Activated CD8-positive, alpha-beta memory T cell treated with anti-CD3 and anti-CD28 coated beads, Interleukin-2, amount 10 ng/mL, durations not matched to agents 7 days and 5 days (primary cell): ENCODE measurements at regions of chr3 and their contacts with region 1.

Region 1: GRCh38 chr3:169966428-169966950 is at the start of gene SEC62:
- DNase-seq: peak; percentile 94
- ATAC-seq: peak; percentile 91
- H3K4me3 Mint-ChIP-seq: peak within 1 kb of the TSS; percentile 80
- H3K27ac Mint-ChIP-seq: peak within 1 kb of the TSS; percentile 93
- H3K4me1 Mint-ChIP-seq: peaks cover 41% of the 10 kb centered on the region
- H3K27me3 Mint-ChIP-seq: no peaks in the 10 kb centered on the region
- total RNA-seq, gene SEC62: 36.0 to 47.7 TPM

Region 2: GRCh38 chr3:169980055-169980454 is 13.6 kb after region 1 on chr3:
- CTCF ChIA-PET with region 1: interaction called, 10 read pairs
- DNase-seq: no peak
- ATAC-seq: no peak
- H3K4me3 Mint-ChIP-seq: no peak overlapping the region
- H3K27ac Mint-ChIP-seq: no peak overlapping the region
- H3K4me1 Mint-ChIP-seq: peaks cover 2% of the 10 kb centered on the region
- H3K27me3 Mint-ChIP-seq: no peaks in the 10 kb centered on the region

Region 3: DNA sequence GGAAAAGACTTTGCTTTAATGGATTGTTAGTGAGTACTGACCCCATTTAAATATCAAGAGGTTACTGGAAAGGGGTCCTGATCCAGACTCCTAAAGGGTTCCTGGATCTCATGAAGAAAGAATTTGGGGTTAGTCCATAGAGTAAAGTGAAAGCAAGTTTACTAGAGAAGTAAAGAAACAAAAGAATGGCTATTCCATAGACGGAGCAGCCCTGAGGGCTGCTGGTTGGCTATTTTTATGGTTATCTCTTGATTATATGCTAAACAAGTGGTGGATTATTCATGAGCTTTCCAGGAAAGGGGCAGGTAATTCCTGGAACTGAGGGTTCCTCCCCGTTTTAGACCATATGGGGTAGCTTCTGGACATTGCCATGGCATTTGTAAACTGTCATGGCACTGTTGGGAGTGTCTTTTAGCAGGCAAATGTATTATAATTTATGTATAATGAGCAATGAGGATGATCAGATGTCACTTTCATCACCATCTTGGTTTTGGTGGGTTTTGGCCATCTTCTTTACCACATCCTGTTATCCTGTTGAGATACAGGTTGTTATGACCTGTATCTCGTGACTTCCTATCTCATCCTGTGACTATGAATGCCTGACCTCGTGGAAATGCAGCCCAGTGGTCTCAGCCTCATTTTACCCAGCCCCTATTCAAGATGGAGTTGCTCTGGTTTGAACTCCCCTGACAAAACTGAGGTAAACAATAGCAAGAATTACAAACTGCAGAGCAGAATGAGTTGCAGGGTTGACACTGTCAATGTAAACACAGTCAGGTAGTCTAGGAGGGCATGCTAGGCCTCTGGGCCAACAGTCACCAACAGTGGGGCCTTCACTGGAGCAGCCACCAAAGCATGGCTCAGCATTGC is 61.0 kb after region 1 on chr3:
- CTCF ChIA-PET with region 1: no interaction called
- DNase-seq: peak; percentile 73
- ATAC-seq: peak; percentile 69
- H3K4me3 Mint-ChIP-seq: no peak overlapping the region
- H3K27ac Mint-ChIP-seq: peak overlapping the region; percentile 67
- H3K4me1 Mint-ChIP-seq: peaks cover 16% of the 10 kb centered on the region
- H3K27me3 Mint-ChIP-seq: peaks cover 4% of the 10 kb centered on the region